Activated B cell treated with CpG ODN at 0.5 μM for 24 hours (primary cell): ENCODE measurements at regions of chr11 and their contacts with region 1.

Region 1: DNA sequence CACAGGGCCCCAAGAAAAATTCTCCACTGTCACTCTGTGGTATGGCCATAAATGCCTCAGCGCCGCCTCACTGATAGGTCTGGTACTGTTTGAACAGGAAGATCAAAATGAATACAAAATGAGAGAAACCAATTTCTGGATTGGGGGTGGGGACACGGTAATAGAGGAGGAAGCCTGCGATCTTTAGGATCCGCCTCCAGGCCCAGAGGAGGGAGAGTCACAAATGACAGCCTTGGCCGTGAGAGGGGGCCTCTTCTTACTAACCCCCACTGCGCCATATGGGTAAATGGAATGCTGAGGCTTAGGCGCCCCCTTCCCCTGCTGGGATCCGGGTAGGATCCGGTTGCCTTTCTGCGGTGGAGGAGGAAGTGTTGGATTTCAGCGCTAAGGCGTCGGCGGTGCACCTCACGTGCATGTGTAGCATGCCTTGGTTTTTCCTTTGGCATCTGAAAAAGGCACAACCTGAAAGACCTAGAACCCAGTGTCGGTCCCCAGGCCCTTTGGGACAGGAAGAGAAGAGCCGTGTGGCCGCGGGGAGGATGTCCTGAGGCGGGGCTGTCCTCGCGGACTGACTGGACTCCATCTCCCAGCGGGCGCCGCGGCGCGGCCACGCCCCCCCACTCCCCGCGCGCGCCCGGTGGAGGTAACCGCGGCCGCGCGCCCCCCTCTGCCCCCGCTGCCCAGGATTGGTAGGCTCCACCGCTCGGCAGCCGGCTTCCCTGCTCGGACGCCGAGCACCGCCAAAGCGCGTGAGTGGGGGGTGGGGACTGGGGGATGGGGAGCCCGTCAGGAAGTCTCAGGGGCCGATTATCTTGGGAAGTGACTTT is 718 bp upstream of the MADD start:
- DNase-seq: peak; percentile 88
- ATAC-seq: peak; percentile 62
- H3K4me3 Mint-ChIP-seq: peak overlapping the region; percentile 93
- H3K27ac Mint-ChIP-seq: peak overlapping the region; percentile 97
- H3K4me1 Mint-ChIP-seq: peaks cover 59% of the 10 kb centered on the region
- H3K27me3 Mint-ChIP-seq: no peaks in the 10 kb centered on the region
- CTCF ChIP-seq: no peak

Region 2: DNA sequence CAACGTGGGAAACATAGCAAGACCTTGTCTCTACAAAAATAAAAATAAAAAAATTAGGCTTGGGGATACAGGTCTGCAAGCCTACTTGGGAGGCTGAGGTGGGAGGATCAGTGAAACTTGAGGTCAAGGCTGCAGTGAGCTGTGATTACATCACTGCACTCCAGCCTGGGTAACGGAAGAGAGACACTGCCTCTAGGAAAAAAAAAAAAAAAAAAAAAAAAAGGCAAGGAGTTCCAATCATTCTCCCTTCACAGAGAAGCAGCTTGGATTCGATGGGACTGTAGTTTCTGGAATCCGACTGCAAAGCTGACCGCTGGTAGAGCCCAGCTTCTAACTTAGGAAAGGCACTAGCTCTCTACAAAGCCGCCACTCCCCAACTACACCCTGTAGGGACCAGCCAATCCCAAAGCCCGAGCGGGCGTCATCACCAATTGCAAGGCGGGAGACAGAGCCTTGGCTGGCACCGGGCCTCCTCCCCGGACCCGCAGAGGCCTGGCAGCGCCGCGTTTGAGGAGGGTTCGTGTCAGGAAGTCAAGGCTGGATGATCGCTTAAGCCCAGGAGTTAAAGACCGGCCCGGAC is 55.1 kb before region 1 on chr11:
- CTCF ChIA-PET with region 1: no interaction called
- POLR2A ChIA-PET with region 1: interaction called, 57 read pairs
- intact Hi-C with region 1: loop called (anchors 1 kb)
- DNase-seq: peak; percentile 72
- ATAC-seq: peak; percentile 73
- H3K4me3 Mint-ChIP-seq: peak overlapping the region; percentile 99
- H3K27ac Mint-ChIP-seq: peak overlapping the region; percentile 100
- H3K4me1 Mint-ChIP-seq: peaks cover 35% of the 10 kb centered on the region
- H3K27me3 Mint-ChIP-seq: no peaks in the 10 kb centered on the region
- CTCF ChIP-seq: no peak

Region 3: GRCh38 chr11:47302853-47303252 is 33.6 kb after region 1 on chr11:
- CTCF ChIA-PET with region 1: interaction called, 4 read pairs
- POLR2A ChIA-PET with region 1: interaction called, 13 read pairs
- intact Hi-C with region 1: no loop called
- DNase-seq: no peak
- ATAC-seq: no peak
- H3K4me3 Mint-ChIP-seq: no peak overlapping the region
- H3K27ac Mint-ChIP-seq: no peak overlapping the region
- H3K4me1 Mint-ChIP-seq: no peaks in the 10 kb centered on the region
- H3K27me3 Mint-ChIP-seq: no peaks in the 10 kb centered on the region
- CTCF ChIP-seq: no peak

Region 4: DNA sequence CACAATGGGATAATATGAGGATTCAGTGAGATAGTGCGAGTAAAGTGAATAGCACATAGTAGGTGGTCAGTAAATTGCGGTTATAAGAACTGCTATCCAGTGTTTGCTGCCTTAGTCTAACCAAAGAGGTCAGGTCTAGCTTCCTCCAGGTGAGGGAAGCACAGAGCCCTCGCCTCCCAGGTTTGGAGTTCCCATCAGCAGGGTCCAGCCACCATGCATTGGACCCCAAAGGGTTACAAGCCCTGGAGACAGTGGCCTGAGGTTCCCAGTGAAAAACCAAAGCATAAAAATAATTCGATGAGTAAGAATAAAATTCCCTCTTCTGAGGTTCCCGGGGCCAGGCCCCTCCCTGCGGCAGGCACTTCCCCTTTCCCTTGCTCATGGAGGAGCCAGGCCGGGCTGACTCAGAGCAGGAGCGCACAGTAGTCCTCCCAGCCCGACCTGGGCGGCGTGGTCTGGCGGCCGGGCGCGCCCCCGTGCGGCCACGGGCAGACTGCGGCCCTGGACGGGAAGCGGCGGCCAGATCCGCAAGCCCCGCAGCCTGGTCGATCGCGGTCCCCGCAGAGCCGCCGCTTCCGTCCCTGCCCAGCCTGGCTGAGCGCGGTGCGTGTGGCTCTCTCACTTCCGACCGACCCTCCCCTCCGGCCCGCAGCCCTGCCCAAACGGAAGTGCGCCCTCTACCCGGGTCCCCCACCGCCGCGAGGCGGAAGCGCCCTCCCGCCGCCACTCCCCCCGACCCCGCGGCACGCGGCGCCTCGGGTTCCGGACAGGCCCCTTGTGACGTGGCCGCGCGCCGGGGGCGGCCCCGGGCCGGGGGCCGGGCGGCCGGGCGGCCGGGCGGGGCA is 138.8 kb after region 1 on chr11 and contains the start of gene SLC39A13:
- CTCF ChIA-PET with region 1: interaction called, 5 read pairs
- POLR2A ChIA-PET with region 1: interaction called, 6 read pairs
- intact Hi-C with region 1: loop called (anchors 1 kb)
- DNase-seq: peak; percentile 98
- ATAC-seq: peak; percentile 85
- H3K4me3 Mint-ChIP-seq: peak within 1 kb of the TSS; percentile 90
- H3K27ac Mint-ChIP-seq: peak within 1 kb of the TSS; percentile 95
- H3K4me1 Mint-ChIP-seq: peaks cover 24% of the 10 kb centered on the region
- H3K27me3 Mint-ChIP-seq: no peaks in the 10 kb centered on the region
- CTCF ChIP-seq: no peak
- total RNA-seq, gene SLC39A13: 27.5 and 28.2 TPM in 2 replicates

Region 5: GRCh38 chr11:47715082-47715669 is 446.0 kb after region 1 on chr11 and contains the start of gene AGBL2:
- CTCF ChIA-PET with region 1: no interaction called
- POLR2A ChIA-PET with region 1: no interaction called
- intact Hi-C with region 1: loop called (anchors 1 kb)
- DNase-seq: peak; percentile 82
- ATAC-seq: peak; percentile 99
- H3K4me3 Mint-ChIP-seq: peak within 1 kb of the TSS; percentile 96
- H3K27ac Mint-ChIP-seq: peak within 1 kb of the TSS; percentile 97
- H3K4me1 Mint-ChIP-seq: peaks cover 11% of the 10 kb centered on the region
- H3K27me3 Mint-ChIP-seq: no peaks in the 10 kb centered on the region
- CTCF ChIP-seq: no peak
- total RNA-seq, gene AGBL2: 7.0 and 8.2 TPM in 2 replicates